A549 (cell line): ENCODE measurements at regions of chr3 and their contacts with region 1.

Region 1: GRCh38 chr3:58305882-58306711 is at the starts of genes HTD2 and RPP14:
- DNase-seq: peak; percentile 64 to 96
- ATAC-seq: peak; percentile 94 to 96
- H3K4me3 ChIP-seq: peak within 1 kb of the TSS; percentile 96
- H3K27ac ChIP-seq: peak within 1 kb of the TSS; percentile 87 to 97
- H3K4me1 ChIP-seq: peaks cover 16% of the 10 kb centered on the region
- CTCF ChIP-seq: peak; percentile 71
- EP300 ChIP-seq: no peak
- POLR2A ChIP-seq: peak; percentile 57
- RAD21 ChIP-seq: peak; percentile 14 to 26; a peak in 3 of 5 replicates
- polyA plus RNA-seq, gene HTD2: 7.8 and 8.4 TPM in 2 replicates
- polyA plus RNA-seq, gene RPP14: 14.1 and 21.5 TPM in 2 replicates

Region 2: DNA sequence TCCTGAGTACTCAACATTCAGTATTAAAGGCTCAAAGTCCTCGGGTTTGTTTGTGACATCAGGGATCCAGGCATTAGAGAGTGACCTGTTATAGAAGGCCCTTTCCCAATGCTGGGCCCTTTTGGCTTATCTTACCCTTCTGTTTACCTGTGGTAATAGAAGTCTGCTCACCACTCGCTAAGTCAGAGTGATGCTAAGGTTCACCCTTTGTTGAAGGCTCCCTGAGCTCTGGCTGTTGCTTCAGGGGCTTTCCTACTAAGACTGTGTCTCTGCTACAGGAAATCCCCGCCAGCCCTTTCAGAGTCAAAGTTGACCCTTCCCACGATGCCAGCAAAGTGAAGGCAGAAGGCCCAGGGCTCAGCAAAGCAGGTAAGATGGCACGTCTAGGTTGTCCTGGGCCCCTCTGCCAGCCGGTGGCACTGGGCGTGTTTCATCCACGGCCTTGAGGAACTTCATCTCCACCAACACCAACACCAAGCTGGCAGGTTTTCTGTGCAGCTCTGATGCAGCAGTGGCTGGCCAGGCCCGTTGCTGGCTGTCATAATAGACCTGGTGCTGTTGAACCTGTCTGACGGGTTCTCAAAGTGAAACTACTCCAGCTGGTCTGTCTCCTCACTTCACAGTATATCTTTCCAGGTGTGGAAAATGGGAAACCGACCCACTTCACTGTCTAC is 194.4 kb before region 1 on chr3:
- CTCF ChIA-PET with region 1: no interaction called
- POLR2A ChIA-PET with region 1: no interaction called
- DNase-seq: no peak
- ATAC-seq: no peak; a peak in 2 of 6 replicates
- H3K4me3 ChIP-seq: no peak overlapping the region
- H3K27ac ChIP-seq: 0 out of 6 replicates have a peak overlapping the region, but pooled peaks of 1 of the 2 experiments have one; percentile 19
- H3K4me1 ChIP-seq: peaks cover 26% of the 10 kb centered on the region
- CTCF ChIP-seq: no peak
- EP300 ChIP-seq: no peak
- POLR2A ChIP-seq: no peak
- RAD21 ChIP-seq: no peak

Region 3: GRCh38 chr3:58177747-58178527 is 128.2 kb before region 1 on chr3:
- CTCF ChIA-PET with region 1: interaction called, 172 read pairs
- POLR2A ChIA-PET with region 1: no interaction called
- DNase-seq: peak; percentile 69 to 80
- ATAC-seq: peak; percentile 27 to 70
- H3K4me3 ChIP-seq: no peak overlapping the region
- H3K27ac ChIP-seq: peak overlapping the region; percentile 48 to 98
- H3K4me1 ChIP-seq: peaks cover 75% of the 10 kb centered on the region
- CTCF ChIP-seq: peak; percentile 75
- EP300 ChIP-seq: no peak
- POLR2A ChIP-seq: no peak
- RAD21 ChIP-seq: peak; percentile 57 to 62

Region 4: DNA sequence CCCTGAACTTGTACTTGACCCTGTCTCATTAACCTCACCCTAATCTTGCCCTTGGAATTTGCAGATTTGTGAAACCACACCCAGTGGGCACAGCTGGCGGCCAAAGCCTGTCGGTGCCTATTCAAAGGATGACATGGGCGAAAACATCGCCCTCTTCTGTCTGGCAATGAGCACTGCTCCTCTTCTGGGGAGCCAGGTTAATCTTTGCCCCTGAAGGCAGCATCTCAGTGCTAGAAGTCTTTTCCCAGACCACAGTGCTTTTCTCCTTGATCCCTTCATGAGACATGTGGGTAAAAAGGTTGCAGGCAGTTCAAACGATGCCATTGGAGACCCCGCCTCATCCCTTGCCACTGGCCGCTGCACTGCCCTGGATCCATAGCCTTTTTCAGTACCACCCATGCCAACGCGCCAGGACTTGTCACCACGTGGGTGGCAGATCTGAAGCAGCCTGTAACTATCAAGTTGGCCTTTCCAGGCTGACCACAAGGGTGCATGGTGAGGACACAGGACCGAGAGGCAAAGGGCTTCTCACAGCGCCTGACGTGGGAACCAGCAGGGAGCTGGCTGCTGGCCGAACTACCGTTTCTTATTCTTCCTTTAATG is 88.8 kb before region 1 on chr3:
- CTCF ChIA-PET with region 1: interaction called, 52 read pairs
- POLR2A ChIA-PET with region 1: no interaction called
- DNase-seq: peak; percentile 76 to 92
- ATAC-seq: peak; percentile 98 to 99
- H3K4me3 ChIP-seq: no peak overlapping the region
- H3K27ac ChIP-seq: peak overlapping the region; percentile 70 to 86
- H3K4me1 ChIP-seq: peaks cover 24% of the 10 kb centered on the region
- CTCF ChIP-seq: peak; percentile 78
- EP300 ChIP-seq: no peak
- POLR2A ChIP-seq: no peak
- RAD21 ChIP-seq: peak; percentile 54

Region 5: GRCh38 chr3:58322793-58323192 is 16.7 kb after region 1 on chr3:
- CTCF ChIA-PET with region 1: interaction called, 34 read pairs
- POLR2A ChIA-PET with region 1: interaction called, 12 read pairs
- DNase-seq: no peak
- ATAC-seq: peak in 1 of 2 experiments; percentile 43; a peak in 1 of 6 replicates
- H3K4me3 ChIP-seq: no peak overlapping the region
- H3K27ac ChIP-seq: no peak overlapping the region
- H3K4me1 ChIP-seq: no peaks in the 10 kb centered on the region
- CTCF ChIP-seq: no peak
- EP300 ChIP-seq: no peak
- POLR2A ChIP-seq: no peak
- RAD21 ChIP-seq: no peak

Region 6: GRCh38 chr3:58532794-58533220 is 226.7 kb after region 1 on chr3:
- CTCF ChIA-PET with region 1: interaction called, 11 read pairs
- POLR2A ChIA-PET with region 1: no interaction called
- DNase-seq: peak; percentile 69 to 74
- ATAC-seq: peak; percentile 76 to 85; a peak in 5 of 6 replicates
- H3K4me3 ChIP-seq: no peak overlapping the region
- H3K27ac ChIP-seq: peak overlapping the region; percentile 30 to 64; a peak in 5 of 6 replicates
- H3K4me1 ChIP-seq: peaks cover 60% of the 10 kb centered on the region
- CTCF ChIP-seq: peak; percentile 80
- EP300 ChIP-seq: no peak
- POLR2A ChIP-seq: no peak
- RAD21 ChIP-seq: peak; percentile 85